Ascending aorta (tissue), 2 donors: ENCODE measurements at regions of chr1 and their contacts with region 1.

Region 1: DNA sequence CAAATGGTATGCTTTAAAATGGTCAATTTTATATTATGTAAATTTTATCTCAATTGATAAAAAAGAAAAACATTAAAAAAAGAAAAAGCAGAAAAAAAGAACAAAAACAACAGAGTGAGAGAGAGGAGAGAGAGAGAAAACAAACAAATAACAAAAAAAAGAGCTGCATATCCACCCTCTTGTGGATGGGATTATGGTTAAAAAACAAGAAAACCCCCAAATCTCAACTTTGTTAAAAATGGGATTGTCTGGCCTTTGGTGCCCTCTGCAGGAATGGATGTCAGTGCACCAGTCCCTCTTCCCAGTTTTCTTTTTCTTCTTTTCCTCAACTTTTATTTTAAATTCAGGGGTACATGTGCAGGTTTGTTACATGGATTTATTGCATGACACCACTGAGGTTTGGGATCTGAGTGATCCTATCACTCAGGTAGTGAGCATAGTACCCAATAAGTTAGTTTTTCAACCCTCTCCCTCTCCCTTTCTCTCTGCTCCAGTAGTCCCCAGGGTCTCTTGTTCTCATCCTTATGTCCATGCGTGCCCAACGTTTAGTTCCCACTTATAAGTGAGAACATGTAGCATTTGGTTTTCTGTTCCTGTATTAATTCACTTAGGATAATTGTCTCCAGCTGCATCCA is 28.1 kb downstream of the RNF187 start:
- DNase-seq: peak in 1 of 2 donors; percentile 39
- H3K4me3 ChIP-seq: no peak overlapping the region
- H3K27ac ChIP-seq: no peak overlapping the region
- H3K4me1 ChIP-seq: no peaks in the 10 kb centered on the region
- H3K27me3 ChIP-seq: no peaks in the 10 kb centered on the region
- CTCF ChIP-seq: peak in 2 of 3 experiments; percentile 48 to 61

Region 2: GRCh38 chr1:228131766-228132165 is 383.6 kb before region 1 on chr1:
- intact Hi-C with region 1: loop called (anchors 2 kb)
- DNase-seq: no peak
- H3K4me3 ChIP-seq: no peak overlapping the region
- H3K27ac ChIP-seq: no peak overlapping the region
- H3K4me1 ChIP-seq: no peaks in the 10 kb centered on the region
- H3K27me3 ChIP-seq: no peaks in the 10 kb centered on the region
- CTCF ChIP-seq: no peak

Region 3: DNA sequence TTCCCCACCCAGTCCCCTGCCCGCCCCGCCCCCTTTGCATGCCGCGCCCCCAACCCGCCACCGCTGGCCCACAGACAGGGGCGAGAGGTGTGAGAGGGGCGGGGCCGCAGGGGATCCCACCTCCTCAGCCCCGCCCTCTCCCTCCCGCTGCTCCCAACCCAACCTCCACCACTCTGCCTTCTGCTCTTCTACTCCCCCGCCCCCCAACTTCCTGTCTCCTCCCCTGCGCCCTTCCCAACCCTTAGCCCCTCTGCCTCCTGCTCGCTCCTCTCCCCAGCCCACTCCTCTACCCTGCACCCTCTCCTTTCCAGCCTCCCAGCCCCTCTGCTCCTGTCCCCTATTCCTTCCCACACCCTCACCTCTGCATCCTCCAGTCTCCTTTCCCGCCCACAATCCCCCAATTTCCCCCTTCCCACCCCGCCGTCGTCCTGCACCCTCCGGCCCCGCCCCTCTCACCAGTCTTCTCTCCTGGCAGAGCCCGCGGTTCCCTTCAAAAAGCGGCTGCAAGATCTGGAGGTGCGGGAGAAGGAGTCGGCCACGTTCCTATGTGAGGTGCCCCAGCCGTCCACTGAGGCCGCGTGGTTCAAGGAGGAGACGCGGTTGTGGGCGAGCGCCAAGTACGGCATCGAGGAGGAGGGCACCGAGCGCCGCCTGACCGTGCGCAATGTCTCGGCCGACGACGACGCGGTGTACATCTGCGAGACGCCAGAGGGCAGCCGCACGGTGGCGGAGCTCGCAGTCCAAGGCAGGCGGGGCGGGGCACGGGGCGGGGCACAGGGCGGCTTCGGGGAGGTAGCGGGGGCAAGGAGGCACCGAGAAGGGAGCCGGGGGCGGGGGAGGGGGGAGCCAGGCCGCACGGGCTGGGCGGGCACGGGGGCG is 302.1 kb before region 1 on chr1:
- intact Hi-C with region 1: loop called (anchors 2 kb)
- DNase-seq: peak; percentile 38 to 91
- H3K4me3 ChIP-seq: peak overlapping the region; percentile 48 to 73
- H3K27ac ChIP-seq: peak overlapping the region in 1 of 2 donors; percentile 32
- H3K4me1 ChIP-seq: peaks cover 8 to 14% of the 10 kb centered on the region in 2 donors
- H3K27me3 ChIP-seq: no peaks in the 10 kb centered on the region
- CTCF ChIP-seq: peak; percentile 33 to 70 (median 50)

Region 4: GRCh38 chr1:228471762-228472398 is 43.4 kb before region 1 on chr1:
- intact Hi-C with region 1: no loop called
- DNase-seq: no peak
- H3K4me3 ChIP-seq: no peak overlapping the region
- H3K27ac ChIP-seq: no peak overlapping the region
- H3K4me1 ChIP-seq: no peaks in the 10 kb centered on the region
- H3K27me3 ChIP-seq: no peaks in the 10 kb centered on the region
- CTCF ChIP-seq: peak in 1 of 3 experiments; percentile 27